ENCODE measurements at regions of chr9 and their contacts with region 1.

Region 1: DNA sequence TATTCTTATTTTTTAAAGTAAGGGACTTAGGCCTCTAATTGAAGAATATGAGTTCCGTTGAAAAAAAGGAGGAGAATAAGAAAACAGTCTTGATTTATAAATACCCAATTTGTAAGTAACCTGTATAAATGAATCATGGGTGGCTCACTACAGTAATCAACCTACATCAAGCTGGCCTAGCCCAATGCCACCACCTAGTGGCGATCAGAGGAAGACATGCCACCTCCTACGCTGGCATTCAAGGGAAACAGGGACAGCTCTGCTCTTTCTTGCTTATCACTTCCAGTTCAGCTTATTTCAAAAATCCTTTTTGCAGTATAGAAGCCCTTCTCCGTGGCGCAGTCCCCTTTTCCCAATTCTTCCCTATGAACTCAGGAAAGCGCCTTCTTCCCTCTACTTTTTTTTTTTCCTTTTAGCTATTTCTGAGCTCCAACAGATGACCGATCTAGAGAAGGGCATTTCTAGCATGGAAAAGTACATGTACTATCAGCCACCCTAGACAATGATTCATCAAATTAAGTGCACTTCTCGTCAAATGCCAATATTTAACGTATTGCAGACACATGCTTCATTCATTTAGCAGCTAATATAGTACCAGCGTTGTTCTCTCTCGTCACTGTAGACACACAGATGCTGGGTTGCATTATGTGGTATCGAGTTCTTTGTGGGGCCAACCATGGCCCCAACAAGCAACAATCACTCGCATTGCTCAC is 28.3 kb downstream of the PTPN3 start:
- DNase-seq: peak; percentile 69

Region 2: DNA sequence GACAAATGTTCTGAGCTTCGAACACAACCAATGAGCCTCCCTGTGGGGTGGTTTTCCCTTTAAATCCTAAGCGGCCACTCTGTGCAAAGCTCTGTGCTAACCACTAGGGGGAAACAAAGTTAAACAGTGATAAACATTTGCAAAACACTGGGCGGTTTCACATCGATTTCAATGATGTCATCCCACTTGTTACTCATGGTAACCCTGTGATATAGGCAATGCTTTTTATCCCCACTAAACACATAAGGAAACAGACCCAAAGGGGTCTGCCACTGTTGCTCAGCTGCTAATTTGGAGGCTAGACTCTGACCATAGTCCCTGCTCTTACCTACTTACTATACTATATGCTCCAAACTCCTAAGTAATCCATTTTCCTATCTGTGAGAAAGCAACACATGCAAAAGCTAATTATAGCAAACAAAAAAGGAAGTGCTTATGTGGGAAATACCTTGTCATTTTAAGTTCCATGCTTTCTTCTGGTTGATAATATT is 29.0 kb before region 1 on chr9:
- CTCF ChIA-PET with region 1: interaction called, 15 read pairs
- POLR2A ChIA-PET with region 1: interaction called, 4 read pairs
- DNase-seq: peak; percentile 79

Region 3: DNA sequence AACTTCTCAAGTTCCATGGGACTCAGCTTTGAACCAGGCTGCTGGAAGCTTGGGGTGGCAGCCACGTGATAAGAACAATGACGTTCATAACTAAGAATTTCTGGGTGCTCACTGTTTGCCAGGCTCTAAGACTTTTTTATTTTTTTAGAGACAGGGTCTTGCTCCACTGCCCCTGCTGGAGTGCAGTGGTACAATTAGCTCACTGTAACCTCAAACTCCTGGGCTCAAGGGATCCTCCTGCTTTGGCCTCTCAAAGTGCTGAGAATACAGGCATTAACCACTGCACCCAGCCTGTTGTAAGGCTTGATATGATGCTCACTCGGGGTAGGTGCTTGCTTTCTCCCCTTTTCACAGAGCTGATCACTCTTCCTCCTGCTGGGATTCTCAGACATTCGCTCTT is 10.4 kb before region 1 on chr9:
- CTCF ChIA-PET with region 1: interaction called, 17 read pairs
- POLR2A ChIA-PET with region 1: no interaction called
- DNase-seq: no peak

Measured in HEK293T (cell line).